Activated CD4-positive, alpha-beta memory T cell treated with anti-CD3 and anti-CD28 coated beads for 36 hours (primary cell): ENCODE measurements at regions of chr18 and their contacts with region 1.

Region 1: DNA sequence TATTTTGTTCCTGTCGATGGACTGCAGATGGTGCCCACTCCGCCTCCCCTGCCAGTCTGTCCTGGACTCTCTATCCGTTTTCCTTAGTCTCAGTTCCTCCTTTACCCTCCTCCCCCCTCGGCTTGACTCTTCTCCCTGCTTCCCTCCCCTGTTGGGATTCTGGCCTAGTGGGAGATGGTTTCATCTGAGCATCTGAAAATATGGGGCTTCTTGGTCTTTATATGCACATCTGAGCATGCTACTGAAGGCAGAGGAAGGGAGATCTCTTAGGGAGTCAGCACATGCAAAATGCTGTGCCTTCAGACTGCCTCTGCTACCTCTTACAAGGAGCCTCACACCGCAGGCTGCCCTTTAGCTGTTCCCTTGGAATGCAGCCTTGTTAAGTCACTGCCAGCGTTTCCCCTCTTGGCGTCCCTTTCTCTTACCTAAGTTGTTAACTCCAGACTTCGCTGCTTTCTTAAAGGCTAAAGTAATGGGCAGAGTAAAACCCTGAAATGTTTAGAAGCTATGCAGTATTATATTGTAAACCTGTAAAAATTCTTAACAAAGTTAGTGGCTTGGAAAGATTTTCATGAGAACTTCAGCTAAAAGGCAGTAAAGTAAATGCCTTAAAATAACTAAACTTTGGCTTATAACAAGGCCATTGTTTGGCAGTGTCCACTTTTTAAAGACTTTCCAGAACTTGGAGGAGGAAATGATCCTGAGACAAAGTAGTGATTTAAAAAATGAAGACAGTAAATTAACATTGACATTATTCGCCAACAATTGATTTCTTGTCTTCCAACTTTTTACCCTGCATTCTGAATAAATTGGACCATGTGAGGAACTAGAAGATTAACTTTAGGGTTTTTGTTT is 49.8 kb downstream of the LDLRAD4 start:
- DNase-seq: no peak
- H3K4me3 Mint-ChIP-seq: peak overlapping the region; percentile 7
- H3K27ac Mint-ChIP-seq: peak overlapping the region; percentile 92
- H3K4me1 Mint-ChIP-seq: peaks cover 71% of the 10 kb centered on the region
- H3K27me3 Mint-ChIP-seq: peaks cover 12% of the 10 kb centered on the region

Region 2: DNA sequence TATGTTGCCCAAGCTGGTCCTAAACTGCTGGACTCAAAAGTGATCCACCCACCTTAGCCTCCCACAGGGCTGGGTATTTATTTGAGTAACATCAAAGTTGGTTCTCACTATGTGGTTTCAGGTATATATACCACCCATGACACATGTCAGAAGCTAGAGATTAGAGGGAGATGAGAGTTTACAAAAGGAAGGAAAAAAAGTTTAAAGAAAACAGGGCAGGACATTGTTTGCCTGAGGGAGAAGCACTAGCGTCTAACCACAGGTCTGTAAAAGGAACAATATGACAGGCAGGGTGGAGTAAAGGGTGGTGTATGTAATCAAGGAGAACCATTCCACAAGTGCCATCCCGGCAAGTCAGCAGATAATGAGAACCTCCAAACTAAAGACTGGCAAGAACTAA is 574.4 kb before region 1 on chr18:
- CTCF ChIA-PET with region 1: no interaction called
- POLR2A ChIA-PET with region 1: no interaction called
- intact Hi-C with region 1: no loop called
- DNase-seq: peak; percentile 21
- H3K4me3 Mint-ChIP-seq: no peak overlapping the region
- H3K27ac Mint-ChIP-seq: no peak overlapping the region
- H3K4me1 Mint-ChIP-seq: peaks cover 21% of the 10 kb centered on the region
- H3K27me3 Mint-ChIP-seq: no peaks in the 10 kb centered on the region

Region 3: GRCh38 chr18:13279181-13280069 is 11.0 kb after region 1 on chr18:
- CTCF ChIA-PET with region 1: interaction called, 7 read pairs
- POLR2A ChIA-PET with region 1: interaction called, 42 read pairs
- intact Hi-C with region 1: loop called (anchors 1 kb)
- DNase-seq: peak; percentile 69
- H3K4me3 Mint-ChIP-seq: peak overlapping the region; percentile 57
- H3K27ac Mint-ChIP-seq: peak overlapping the region; percentile 69
- H3K4me1 Mint-ChIP-seq: peaks cover 78% of the 10 kb centered on the region
- H3K27me3 Mint-ChIP-seq: peaks cover 3% of the 10 kb centered on the region

Region 4: DNA sequence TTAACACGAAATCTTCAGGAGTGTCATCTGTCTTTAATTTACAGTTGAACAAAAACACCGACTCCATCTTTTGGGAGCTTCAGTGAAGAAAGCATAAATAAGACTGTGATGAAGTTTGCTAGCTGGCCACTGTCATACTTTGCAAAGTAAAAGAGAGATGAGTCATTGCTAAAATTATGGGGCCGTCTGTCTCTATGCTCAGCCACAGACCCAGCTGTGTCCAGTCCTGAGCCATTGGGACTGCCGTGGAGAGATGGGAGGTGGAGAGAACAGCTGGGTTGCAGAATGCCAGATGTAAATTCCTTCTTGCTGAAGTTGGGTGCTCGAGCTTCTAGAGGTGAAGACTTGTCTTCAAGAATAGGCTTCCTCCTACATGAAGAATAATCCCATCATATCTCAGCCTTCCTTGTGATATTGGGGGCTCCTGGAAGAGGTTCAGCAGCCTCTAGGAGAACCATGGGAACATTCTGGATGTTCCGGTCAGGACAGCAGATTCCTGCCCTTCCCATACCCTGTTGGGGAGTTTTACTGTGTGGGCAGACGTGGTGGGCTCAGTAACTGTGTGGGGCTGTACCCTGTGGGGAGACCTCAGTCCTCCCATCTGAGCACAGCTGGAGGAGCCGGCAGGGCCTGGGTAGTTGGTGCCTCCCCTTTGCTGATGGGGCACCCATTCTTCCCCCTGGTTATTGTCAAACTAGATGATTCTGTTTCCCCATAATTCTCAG is 21.3 kb after region 1 on chr18:
- CTCF ChIA-PET with region 1: interaction called, 8 read pairs
- POLR2A ChIA-PET with region 1: interaction called, 11 read pairs
- intact Hi-C with region 1: loop called (anchors 1 kb)
- DNase-seq: no peak
- H3K4me3 Mint-ChIP-seq: no peak overlapping the region
- H3K27ac Mint-ChIP-seq: peak overlapping the region; percentile 82
- H3K4me1 Mint-ChIP-seq: peaks cover 47% of the 10 kb centered on the region
- H3K27me3 Mint-ChIP-seq: peaks cover 8% of the 10 kb centered on the region

Region 5: GRCh38 chr18:13435596-13436327 is 167.4 kb after region 1 on chr18:
- CTCF ChIA-PET with region 1: no interaction called
- POLR2A ChIA-PET with region 1: interaction called, 6 read pairs
- intact Hi-C with region 1: loop called (anchors 1 kb)
- DNase-seq: peak; percentile 22
- H3K4me3 Mint-ChIP-seq: no peak overlapping the region
- H3K27ac Mint-ChIP-seq: no peak overlapping the region
- H3K4me1 Mint-ChIP-seq: peaks cover 58% of the 10 kb centered on the region
- H3K27me3 Mint-ChIP-seq: no peaks in the 10 kb centered on the region

Region 6: DNA sequence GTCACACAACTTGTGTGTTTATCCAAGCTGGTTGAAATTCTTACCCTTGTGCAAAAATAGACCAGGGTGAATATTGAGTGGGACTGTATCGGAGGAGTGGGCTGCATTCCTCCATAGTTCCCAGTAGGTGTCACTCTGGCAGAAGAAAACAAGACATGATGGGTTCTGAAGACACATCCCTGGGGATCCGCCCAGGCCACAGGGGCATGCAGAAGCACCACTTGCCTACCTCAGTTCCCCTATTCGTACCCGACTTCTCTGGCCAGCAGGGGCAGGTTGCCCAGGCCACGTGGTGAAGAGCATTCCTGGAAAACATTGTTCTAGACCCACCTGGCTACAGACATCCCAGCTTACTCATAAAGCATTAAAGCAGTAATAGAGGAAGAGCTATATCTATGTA is 289.7 kb after region 1 on chr18:
- CTCF ChIA-PET with region 1: interaction called, 3 read pairs
- POLR2A ChIA-PET with region 1: no interaction called
- intact Hi-C with region 1: loop called (anchors 2 kb)
- DNase-seq: peak; percentile 43
- H3K4me3 Mint-ChIP-seq: no peak overlapping the region
- H3K27ac Mint-ChIP-seq: no peak overlapping the region
- H3K4me1 Mint-ChIP-seq: peaks cover 38% of the 10 kb centered on the region
- H3K27me3 Mint-ChIP-seq: no peaks in the 10 kb centered on the region

Region 7: DNA sequence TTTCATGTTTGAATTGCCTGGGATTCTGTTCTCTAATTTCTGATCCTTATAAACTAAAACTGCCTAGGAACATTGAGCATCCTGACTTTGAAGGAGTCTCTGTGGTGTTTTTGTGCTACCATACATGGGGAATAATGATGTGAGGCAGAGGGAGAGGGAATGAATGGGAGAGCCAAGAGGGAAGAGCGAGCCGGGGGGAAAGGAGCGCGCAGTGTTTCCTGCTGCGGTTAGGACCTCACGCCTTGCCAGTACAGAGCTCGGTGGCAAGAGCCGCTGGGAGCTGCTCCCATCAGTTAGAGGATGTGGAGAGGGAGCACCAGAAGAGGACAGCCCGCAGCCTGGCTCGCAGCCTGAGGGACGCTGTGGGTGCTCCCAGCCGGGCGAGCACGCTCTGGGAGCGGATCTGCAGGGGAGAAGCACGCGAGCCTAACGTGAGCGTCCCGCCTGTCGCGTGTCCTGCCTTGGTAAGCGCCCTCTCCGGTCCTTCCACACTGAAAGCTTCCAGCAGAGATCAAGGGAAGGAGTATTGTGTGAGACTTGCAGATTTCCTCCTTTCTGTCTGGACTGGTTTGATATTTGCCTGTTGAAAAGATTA is 343.3 kb after region 1 on chr18:
- CTCF ChIA-PET with region 1: interaction called, 3 read pairs
- POLR2A ChIA-PET with region 1: interaction called, 9 read pairs
- intact Hi-C with region 1: loop called (anchors 2 kb)
- DNase-seq: peak; percentile 26
- H3K4me3 Mint-ChIP-seq: peak overlapping the region; percentile 78
- H3K27ac Mint-ChIP-seq: peak overlapping the region; percentile 92
- H3K4me1 Mint-ChIP-seq: peaks cover 87% of the 10 kb centered on the region
- H3K27me3 Mint-ChIP-seq: no peaks in the 10 kb centered on the region